A549 (cell line): ENCODE measurements at regions of chr18 and their contacts with region 1.

Region 1: GRCh38 chr18:32167975-32168730 is 21.7 kb upstream of the MEP1B start:
- DNase-seq: no peak
- ATAC-seq: no peak
- H3K4me3 ChIP-seq: no peak overlapping the region
- H3K27ac ChIP-seq: no peak overlapping the region
- H3K4me1 ChIP-seq: no peaks in the 10 kb centered on the region
- CTCF ChIP-seq: no peak
- EP300 ChIP-seq: no peak
- POLR2A ChIP-seq: no peak
- RAD21 ChIP-seq: no peak

Region 2: GRCh38 chr18:32470713-32471633 is 302.8 kb after region 1 on chr18 and contains the start of gene GAREM1:
- CTCF ChIA-PET with region 1: no interaction called
- POLR2A ChIA-PET with region 1: no interaction called
- DNase-seq: peak; percentile 56 to 92
- ATAC-seq: peak; percentile 90 to 95
- H3K4me3 ChIP-seq: peak within 1 kb of the TSS; percentile 89
- H3K27ac ChIP-seq: peak within 1 kb of the TSS; percentile 82 to 93
- H3K4me1 ChIP-seq: peaks cover 15% of the 10 kb centered on the region; the same call in 1 of the 3 replicates
- CTCF ChIP-seq: peak; percentile 46
- EP300 ChIP-seq: no peak
- POLR2A ChIP-seq: peak; percentile 73
- RAD21 ChIP-seq: peak; percentile 34 to 87
- polyA plus RNA-seq, gene GAREM1: 5.0 and 6.5 TPM in 2 replicates

Region 3: GRCh38 chr18:32552421-32553030 is 384.4 kb after region 1 on chr18:
- CTCF ChIA-PET with region 1: interaction called, 13 read pairs
- POLR2A ChIA-PET with region 1: no interaction called
- DNase-seq: peak; percentile 34 to 70
- ATAC-seq: peak; percentile 70 to 84; a peak in 5 of 6 replicates
- H3K4me3 ChIP-seq: no peak overlapping the region
- H3K27ac ChIP-seq: no peak overlapping the region
- H3K4me1 ChIP-seq: no peaks in the 10 kb centered on the region
- CTCF ChIP-seq: peak; percentile 55
- EP300 ChIP-seq: no peak
- POLR2A ChIP-seq: no peak
- RAD21 ChIP-seq: peak; percentile 58 to 61; a peak in 4 of 5 replicates